Activated CD4-positive, alpha-beta memory T cell treated with anti-CD3 and anti-CD28 coated beads, Interleukin-2, amount 10 ng/mL, durations not matched to agents 7 days and 5 days (primary cell): ENCODE measurements at regions of chr6 and their contacts with region 1.

Region 1: GRCh38 chr6:149028767-149029405 is 282.1 kb downstream of the UST start:
- DNase-seq: peak; percentile 71
- H3K4me3 Mint-ChIP-seq: no peak overlapping the region
- H3K27ac Mint-ChIP-seq: peak overlapping the region; percentile 71
- H3K4me1 Mint-ChIP-seq: peaks cover 53% of the 10 kb centered on the region
- H3K27me3 Mint-ChIP-seq: no peaks in the 10 kb centered on the region

Region 2: GRCh38 chr6:148932731-148933130 is 96.2 kb before region 1 on chr6:
- CTCF ChIA-PET with region 1: no interaction called
- POLR2A ChIA-PET with region 1: no interaction called
- DNase-seq: no peak
- H3K4me3 Mint-ChIP-seq: no peak overlapping the region
- H3K27ac Mint-ChIP-seq: no peak overlapping the region
- H3K4me1 Mint-ChIP-seq: no peaks in the 10 kb centered on the region
- H3K27me3 Mint-ChIP-seq: no peaks in the 10 kb centered on the region

Region 3: GRCh38 chr6:149054559-149055194 is 25.8 kb after region 1 on chr6:
- CTCF ChIA-PET with region 1: interaction called, 6 read pairs
- POLR2A ChIA-PET with region 1: interaction called, 45 read pairs
- DNase-seq: no peak
- H3K4me3 Mint-ChIP-seq: no peak overlapping the region
- H3K27ac Mint-ChIP-seq: no peak overlapping the region
- H3K4me1 Mint-ChIP-seq: peaks cover 53% of the 10 kb centered on the region
- H3K27me3 Mint-ChIP-seq: no peaks in the 10 kb centered on the region

Region 4: GRCh38 chr6:149075616-149076364 is 46.9 kb after region 1 on chr6:
- CTCF ChIA-PET with region 1: interaction called, 20 read pairs
- POLR2A ChIA-PET with region 1: interaction called, 72 read pairs
- DNase-seq: no peak
- H3K4me3 Mint-ChIP-seq: no peak overlapping the region
- H3K27ac Mint-ChIP-seq: peak overlapping the region; percentile 38
- H3K4me1 Mint-ChIP-seq: peaks cover 46% of the 10 kb centered on the region
- H3K27me3 Mint-ChIP-seq: no peaks in the 10 kb centered on the region

Region 5: GRCh38 chr6:149129371-149130077 is 100.6 kb after region 1 on chr6:
- CTCF ChIA-PET with region 1: interaction called, 11 read pairs
- POLR2A ChIA-PET with region 1: interaction called, 33 read pairs
- DNase-seq: no peak
- H3K4me3 Mint-ChIP-seq: no peak overlapping the region
- H3K27ac Mint-ChIP-seq: peak overlapping the region; percentile 91
- H3K4me1 Mint-ChIP-seq: peaks cover 8% of the 10 kb centered on the region
- H3K27me3 Mint-ChIP-seq: no peaks in the 10 kb centered on the region

Region 6: DNA sequence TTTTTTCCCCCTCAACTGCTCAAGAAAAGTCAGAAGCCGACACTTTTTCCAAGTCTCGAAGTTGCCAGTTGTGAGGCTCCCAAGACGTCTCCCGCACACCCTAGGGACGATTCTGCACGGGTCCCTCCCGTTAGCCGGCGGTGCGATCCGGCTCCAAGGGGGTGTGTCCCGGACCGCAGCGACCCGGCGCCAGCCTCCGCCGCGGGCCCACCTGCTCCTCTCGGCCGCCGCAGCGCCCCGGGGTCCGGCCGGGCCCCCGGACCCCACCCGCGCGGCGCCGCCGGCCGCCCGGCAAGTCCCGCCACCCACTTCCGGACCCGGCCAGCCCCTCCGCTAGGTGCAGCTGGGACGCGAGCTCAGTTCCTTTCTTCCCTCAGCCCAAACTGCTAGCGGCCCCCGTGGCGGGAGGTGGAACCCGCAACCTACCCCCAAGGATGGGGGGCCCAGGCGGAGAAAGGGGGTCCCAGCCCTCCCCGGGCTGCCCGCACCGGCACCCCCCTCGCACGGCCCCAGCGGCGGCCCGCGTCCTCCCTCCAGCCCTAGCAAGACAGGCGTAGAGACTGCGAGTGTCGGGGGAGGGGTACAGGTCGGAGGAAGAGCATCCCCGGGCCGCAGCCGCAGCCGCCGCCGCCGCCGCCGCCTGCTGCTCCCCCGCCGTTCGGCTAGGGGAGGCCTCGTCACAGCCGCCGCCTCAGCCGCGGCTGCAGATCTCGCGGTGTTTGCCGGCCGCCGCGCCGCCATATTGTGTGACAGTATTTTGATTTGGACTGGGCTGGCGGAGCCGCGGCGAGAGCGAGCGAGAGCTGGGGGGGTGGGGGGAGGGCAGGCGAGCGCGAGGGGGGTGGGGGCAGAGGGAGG is 288.1 kb after region 1 on chr6:
- CTCF ChIA-PET with region 1: interaction called, 5 read pairs
- POLR2A ChIA-PET with region 1: interaction called, 131 read pairs
- DNase-seq: peak; percentile 93
- H3K4me3 Mint-ChIP-seq: peak overlapping the region; percentile 84
- H3K27ac Mint-ChIP-seq: peak overlapping the region; percentile 82
- H3K4me1 Mint-ChIP-seq: peaks cover 27% of the 10 kb centered on the region
- H3K27me3 Mint-ChIP-seq: no peaks in the 10 kb centered on the region

Region 7: GRCh38 chr6:149508485-149508884 is 479.6 kb after region 1 on chr6:
- CTCF ChIA-PET with region 1: interaction called, 3 read pairs
- POLR2A ChIA-PET with region 1: interaction called, 14 read pairs
- DNase-seq: no peak
- H3K4me3 Mint-ChIP-seq: peak overlapping the region; percentile 26
- H3K27ac Mint-ChIP-seq: peak overlapping the region; percentile 60
- H3K4me1 Mint-ChIP-seq: peaks cover 43% of the 10 kb centered on the region
- H3K27me3 Mint-ChIP-seq: no peaks in the 10 kb centered on the region

Region 8: DNA sequence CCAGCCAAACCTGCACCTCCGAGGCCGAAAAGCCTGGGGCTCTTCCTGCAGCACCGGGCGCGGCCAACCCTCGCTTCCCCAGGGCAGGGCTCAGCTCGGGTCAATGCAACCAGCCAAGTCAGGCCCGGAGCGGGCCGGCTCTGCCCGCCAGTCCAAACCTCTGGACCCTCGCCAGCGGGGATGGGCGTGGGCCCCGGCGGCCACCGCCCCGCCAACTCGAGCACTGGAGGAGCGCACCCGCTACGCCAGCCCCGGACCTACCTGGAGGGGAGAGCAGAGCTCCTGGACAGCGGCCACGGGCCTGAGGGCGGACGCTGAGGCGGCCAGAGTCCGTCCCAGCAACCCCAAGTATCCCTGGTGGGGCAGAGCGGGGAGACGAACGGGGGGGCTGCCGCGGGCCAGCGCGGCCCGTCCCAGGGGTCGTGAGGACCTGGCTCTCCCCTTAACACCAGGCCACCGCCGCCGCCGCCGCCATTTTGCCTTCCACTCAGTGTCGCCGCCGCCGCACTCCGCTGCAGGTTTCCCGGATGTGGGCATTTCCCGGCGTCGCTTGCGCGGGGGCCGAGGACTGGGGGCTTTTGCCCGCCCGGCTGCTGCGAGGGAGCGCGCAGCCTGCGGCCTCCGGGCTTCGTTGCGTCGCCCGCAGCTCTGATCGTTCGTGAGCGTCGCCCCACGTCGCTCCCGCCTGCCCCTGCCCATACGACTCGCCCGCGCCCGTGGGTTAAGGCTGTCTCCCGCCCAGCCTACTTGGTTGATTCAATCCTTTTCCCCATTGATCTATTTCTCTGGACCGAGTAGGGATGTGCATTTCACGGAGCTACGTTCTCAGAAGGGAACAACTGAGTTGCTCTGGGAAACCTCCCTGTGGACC is 688.9 kb after region 1 on chr6 and contains the start of gene LATS1:
- CTCF ChIA-PET with region 1: no interaction called
- POLR2A ChIA-PET with region 1: interaction called, 11 read pairs
- DNase-seq: peak; percentile 94
- H3K4me3 Mint-ChIP-seq: peak within 1 kb of the TSS; percentile 94
- H3K27ac Mint-ChIP-seq: peak within 1 kb of the TSS; percentile 89
- H3K4me1 Mint-ChIP-seq: peaks cover 37% of the 10 kb centered on the region
- H3K27me3 Mint-ChIP-seq: no peaks in the 10 kb centered on the region
- total RNA-seq, gene LATS1: 30.8 to 31.0 TPM